ENCODE measurements at regions of chr1 and their contacts with region 1.

Region 1: GRCh38 chr1:198620951-198621824 is 17.7 kb upstream of the PTPRC start:
- DNase-seq: peak; percentile 35 to 83 (median 62)
- ATAC-seq: peak; percentile 73 to 82
- H3K4me3 Mint-ChIP-seq: peak overlapping the region; percentile 76 to 94 (median 82)
- H3K27ac Mint-ChIP-seq: peak overlapping the region; percentile 91 to 98 (median 96)
- H3K4me1 Mint-ChIP-seq: peaks cover 42 to 96% (median 80%) of the 10 kb centered on the region in 4 donors
- H3K27me3 Mint-ChIP-seq: no peaks in the 10 kb centered on the region

Region 2: DNA sequence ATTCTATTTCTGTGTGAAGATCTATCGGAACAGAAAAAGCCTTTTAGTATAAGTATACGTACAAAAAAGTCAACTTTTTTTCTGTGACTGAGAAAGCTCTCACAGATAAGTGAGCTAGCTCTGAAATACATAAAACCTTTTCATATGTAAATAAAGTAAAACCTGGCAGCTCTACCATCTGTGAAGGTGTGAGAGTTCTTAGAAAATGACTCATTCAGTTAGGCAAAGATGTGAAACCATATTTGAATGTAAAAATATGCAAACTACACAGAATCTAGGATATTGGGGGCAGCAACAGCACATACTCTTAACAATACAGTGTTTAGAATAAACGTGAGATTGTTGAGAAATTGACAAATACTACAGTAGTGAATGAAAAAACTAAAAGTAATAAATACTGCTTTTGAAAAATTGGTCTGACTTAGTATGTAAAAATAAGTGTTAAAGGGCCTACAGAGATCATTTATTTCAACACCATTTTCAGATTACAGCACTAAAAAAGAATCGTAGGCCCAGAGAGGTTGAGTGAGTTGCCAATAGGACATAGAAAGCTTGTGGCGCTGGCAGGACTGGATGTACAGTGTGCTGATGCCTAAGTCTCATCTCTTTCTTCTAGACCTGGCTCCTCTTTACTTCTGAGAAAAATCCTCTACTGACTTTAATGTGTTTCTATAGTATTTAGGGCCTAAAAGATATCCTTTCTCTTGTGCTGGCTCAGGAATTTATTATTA is 100.5 kb before region 1 on chr1:
- POLR2A ChIA-PET with region 1: interaction called, 21 read pairs
- DNase-seq: peak in 2 of 10 donors; percentile 14 to 25
- ATAC-seq: peak; percentile 17 to 62
- H3K4me3 Mint-ChIP-seq: peak overlapping the region; percentile 41 to 74 (median 62)
- H3K27ac Mint-ChIP-seq: peak overlapping the region; percentile 60 to 97 (median 88)
- H3K4me1 Mint-ChIP-seq: peaks cover 30 to 72% (median 62%) of the 10 kb centered on the region in 4 donors
- H3K27me3 Mint-ChIP-seq: no peaks in the 10 kb centered on the region

Region 3: DNA sequence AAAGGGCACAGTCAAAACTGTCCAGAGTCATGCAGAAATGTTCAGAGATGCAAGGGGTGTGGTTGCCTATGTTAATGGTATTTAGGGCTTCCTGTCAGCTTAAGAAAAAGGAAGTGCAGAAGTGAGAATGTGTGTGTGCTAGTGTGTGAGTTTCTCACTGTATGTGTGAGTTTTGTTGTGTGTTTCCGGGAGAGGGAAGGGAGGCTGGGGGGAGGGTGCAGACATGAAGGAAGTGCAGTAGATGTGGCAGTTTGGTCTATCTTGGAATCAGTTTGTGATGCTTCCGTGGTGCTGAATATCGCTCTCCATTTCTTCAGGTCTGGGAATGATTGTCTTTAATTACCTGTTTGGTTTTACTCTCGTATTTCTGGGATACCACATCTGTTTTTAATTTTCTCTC is 64.2 kb before region 1 on chr1:
- POLR2A ChIA-PET with region 1: interaction called, 12 read pairs
- DNase-seq: peak in 9 of 10 donors; percentile 24 to 89 (median 62)
- ATAC-seq: peak; percentile 77 to 94
- H3K4me3 Mint-ChIP-seq: peak overlapping the region; percentile 59 to 84 (median 73)
- H3K27ac Mint-ChIP-seq: peak overlapping the region; percentile 48 to 95 (median 78)
- H3K4me1 Mint-ChIP-seq: peaks cover 37 to 92% (median 77%) of the 10 kb centered on the region in 4 donors
- H3K27me3 Mint-ChIP-seq: no peaks in the 10 kb centered on the region

Region 4: GRCh38 chr1:198606020-198606438 is 15.2 kb before region 1 on chr1:
- POLR2A ChIA-PET with region 1: interaction called, 59 read pairs
- DNase-seq: no peak
- ATAC-seq: peak; percentile 37 to 39
- H3K4me3 Mint-ChIP-seq: peak overlapping the region in 6 of 10 donors; percentile 6 to 60 (median 40)
- H3K27ac Mint-ChIP-seq: peak overlapping the region in 9 of 10 donors; percentile 63 to 89 (median 81)
- H3K4me1 Mint-ChIP-seq: peaks cover 35 to 77% (median 64%) of the 10 kb centered on the region in 4 donors
- H3K27me3 Mint-ChIP-seq: no peaks in the 10 kb centered on the region

Region 5: DNA sequence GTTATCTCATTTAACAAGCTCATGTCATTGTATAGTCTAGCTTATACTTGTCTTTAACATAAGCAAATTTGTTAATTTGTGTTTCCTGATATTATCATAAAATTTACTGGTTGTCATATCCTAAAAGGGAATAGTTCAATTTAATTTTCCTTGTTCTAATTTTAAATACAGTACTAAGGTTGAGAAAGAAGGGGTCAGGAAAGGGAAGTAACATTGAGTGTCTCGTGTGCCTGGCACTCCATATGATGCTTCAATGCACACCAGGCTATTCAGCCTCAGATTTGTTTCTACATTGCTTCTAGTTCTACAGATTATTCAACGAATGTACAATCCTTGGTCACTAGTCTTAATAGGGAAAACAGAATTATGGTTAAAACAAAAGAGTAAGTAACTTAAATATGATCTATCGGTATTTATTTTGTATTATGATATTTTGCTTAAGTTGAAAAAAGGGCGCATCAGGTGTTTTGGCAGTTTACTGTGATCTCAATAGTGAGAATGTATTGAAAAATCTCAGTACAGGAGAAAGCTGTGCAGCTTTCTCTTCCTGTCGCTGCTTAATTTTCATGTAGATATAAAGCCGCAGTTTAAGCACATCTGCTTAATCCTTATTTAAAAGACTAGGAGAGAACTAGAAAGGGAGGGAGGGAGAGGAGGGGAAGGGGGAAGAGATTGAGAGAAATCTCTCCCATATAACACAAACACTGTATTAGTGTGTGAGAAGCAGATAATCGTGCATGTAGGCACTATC is 30.6 kb after region 1 on chr1:
- POLR2A ChIA-PET with region 1: interaction called, 36 read pairs
- DNase-seq: no peak
- ATAC-seq: peak; percentile 13 to 16
- H3K4me3 Mint-ChIP-seq: peak overlapping the region; percentile 75 to 91 (median 85)
- H3K27ac Mint-ChIP-seq: peak overlapping the region; percentile 83 to 99 (median 96)
- H3K4me1 Mint-ChIP-seq: peaks cover 34 to 83% (median 63%) of the 10 kb centered on the region in 4 donors
- H3K27me3 Mint-ChIP-seq: no peaks in the 10 kb centered on the region

Region 6: DNA sequence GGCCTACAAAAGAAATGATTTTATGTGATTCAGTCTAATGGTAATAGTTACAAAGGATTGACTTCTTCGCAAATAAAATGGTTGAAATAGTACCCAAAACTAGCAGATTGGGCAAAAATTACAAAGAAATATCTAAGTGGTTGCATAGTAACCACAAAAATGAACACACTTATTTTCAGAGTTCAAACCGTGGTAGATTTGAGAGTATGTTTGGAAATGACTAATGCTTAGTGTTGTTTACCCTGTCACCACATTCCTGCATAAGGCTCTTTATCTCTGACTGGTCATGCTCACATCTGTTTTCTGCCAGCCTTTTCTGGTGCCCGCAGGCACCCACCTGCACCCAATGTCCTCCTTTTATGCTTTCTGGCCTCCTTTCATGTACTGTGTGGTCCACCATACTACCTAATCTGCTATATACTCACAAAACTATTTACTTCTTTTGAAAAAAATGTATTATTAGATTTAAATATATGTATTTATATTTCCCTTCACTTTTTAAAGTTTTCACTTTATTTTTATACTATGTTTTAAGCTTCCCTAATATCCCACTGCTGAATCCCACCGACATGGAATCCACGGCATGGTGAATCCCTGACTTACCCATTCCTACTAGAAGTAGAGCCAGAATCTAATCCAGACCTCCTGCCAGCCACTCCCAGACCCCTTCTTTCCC is 48.0 kb after region 1 on chr1:
- POLR2A ChIA-PET with region 1: interaction called, 12 read pairs
- DNase-seq: peak in 2 of 10 donors; percentile 41 to 59
- ATAC-seq: peak; percentile 68 to 70
- H3K4me3 Mint-ChIP-seq: peak overlapping the region; percentile 31 to 78 (median 70)
- H3K27ac Mint-ChIP-seq: peak overlapping the region; percentile 89 to 99 (median 94)
- H3K4me1 Mint-ChIP-seq: peaks cover 46 to 92% (median 83%) of the 10 kb centered on the region in 4 donors
- H3K27me3 Mint-ChIP-seq: no peaks in the 10 kb centered on the region

Region 7: DNA sequence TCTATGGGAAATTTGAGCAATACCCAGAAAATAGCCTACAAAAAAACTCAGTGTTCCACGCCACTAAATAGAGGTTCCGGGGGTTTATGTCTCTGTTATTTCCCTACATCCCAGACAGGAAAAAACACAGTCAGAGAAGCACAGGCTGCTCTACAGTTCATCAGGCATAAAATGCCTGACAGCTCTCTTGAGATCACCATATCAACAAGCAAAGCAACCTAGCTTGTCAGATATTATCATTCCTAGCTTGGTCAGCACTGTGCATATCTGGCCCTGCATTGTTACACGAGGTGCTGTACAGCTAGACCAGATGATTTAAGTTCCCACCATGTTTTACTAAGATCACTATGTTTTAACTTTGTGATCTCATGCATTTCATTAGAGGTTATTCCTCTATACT is 190.3 kb after region 1 on chr1:
- POLR2A ChIA-PET with region 1: no interaction called
- DNase-seq: no peak
- ATAC-seq: no peak
- H3K4me3 Mint-ChIP-seq: no peak overlapping the region
- H3K27ac Mint-ChIP-seq: peak overlapping the region in 1 of 10 donors; percentile 16
- H3K4me1 Mint-ChIP-seq: no peaks in the 10 kb centered on the region
- H3K27me3 Mint-ChIP-seq: no peaks in the 10 kb centered on the region